ENCODE measurements at regions of chr6 and their contacts with region 1.

Region 1: GRCh38 chr6:20126789-20127653 is 85.2 kb downstream of the MBOAT1 start:
- DNase-seq: peak in 1 of 2 experiments; percentile 88
- H3K4me3 ChIP-seq: no peak overlapping the region
- H3K27ac ChIP-seq: no peak overlapping the region
- H3K4me1 ChIP-seq: peaks cover 0 to 3% (median 1%) of the 10 kb centered on the region in 4 experiments; a peak in 3 of 7 replicates
- H3K27me3 ChIP-seq: no peaks in the 10 kb centered on the region
- CTCF ChIP-seq: peak; percentile 86 to 97 (median 97)
- EP300 ChIP-seq: no peak
- POLR2A ChIP-seq: no peak
- RAD21 ChIP-seq: peak; percentile 65 to 74

Region 2: DNA sequence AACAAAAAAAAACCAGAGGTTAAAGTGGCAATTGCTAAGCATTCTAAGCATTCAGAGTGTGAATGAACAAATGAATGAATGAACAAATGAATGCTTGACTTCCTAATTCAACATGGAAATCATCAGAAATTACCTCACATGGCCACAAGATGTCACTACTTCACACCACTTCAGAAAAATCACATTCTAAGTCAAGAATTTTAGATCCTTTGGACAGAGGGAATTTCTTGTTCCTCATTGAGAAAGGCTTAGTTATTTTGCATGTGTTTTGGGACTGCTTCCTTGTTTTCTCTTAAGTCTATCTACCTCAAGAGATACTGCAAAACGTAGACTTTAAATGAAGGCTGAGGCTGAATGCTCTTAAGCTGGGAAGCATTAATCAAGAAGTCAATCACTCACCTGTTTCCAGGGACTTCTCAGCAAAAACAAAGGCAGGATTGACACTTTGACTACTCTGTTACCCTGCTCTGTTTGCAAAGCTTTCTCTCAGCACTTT is 34.9 kb before region 1 on chr6:
- CTCF ChIA-PET with region 1: interaction called, 53 read pairs
- POLR2A ChIA-PET with region 1: interaction called, 5 read pairs
- DNase-seq: no peak
- H3K4me3 ChIP-seq: no peak overlapping the region
- H3K27ac ChIP-seq: no peak overlapping the region
- H3K4me1 ChIP-seq: peaks cover 0 to 3% (median 0%) of the 10 kb centered on the region in 4 experiments; a peak in 2 of 7 replicates
- H3K27me3 ChIP-seq: no peaks in the 10 kb centered on the region
- CTCF ChIP-seq: peak in 2 of 3 experiments; percentile 32 to 73; a peak in 2 of 4 replicates
- EP300 ChIP-seq: no peak
- POLR2A ChIP-seq: no peak
- RAD21 ChIP-seq: peak; percentile 76 to 80

Region 3: GRCh38 chr6:20098267-20098876 is 28.6 kb before region 1 on chr6:
- CTCF ChIA-PET with region 1: interaction called, 53 read pairs
- POLR2A ChIA-PET with region 1: no interaction called
- DNase-seq: no peak
- H3K4me3 ChIP-seq: no peak overlapping the region
- H3K27ac ChIP-seq: no peak overlapping the region
- H3K4me1 ChIP-seq: no peaks in the 10 kb centered on the region; a peak in 2 of 7 replicates
- H3K27me3 ChIP-seq: no peaks in the 10 kb centered on the region
- CTCF ChIP-seq: no peak
- EP300 ChIP-seq: no peak
- POLR2A ChIP-seq: no peak
- RAD21 ChIP-seq: no peak

Region 4: GRCh38 chr6:20109526-20109925 is 17.5 kb before region 1 on chr6:
- CTCF ChIA-PET with region 1: interaction called, 25 read pairs
- POLR2A ChIA-PET with region 1: interaction called, 4 read pairs
- DNase-seq: no peak
- H3K4me3 ChIP-seq: no peak overlapping the region
- H3K27ac ChIP-seq: no peak overlapping the region
- H3K4me1 ChIP-seq: no peaks in the 10 kb centered on the region
- H3K27me3 ChIP-seq: no peaks in the 10 kb centered on the region
- CTCF ChIP-seq: no peak
- EP300 ChIP-seq: no peak
- POLR2A ChIP-seq: no peak
- RAD21 ChIP-seq: no peak

Measured in H1 (cell line).